Heart right ventricle (tissue), 16 donors: ENCODE measurements at regions of chr11 and their contacts with region 1.

Region 1: GRCh38 chr11:43895601-43896000 is 15.0 kb downstream of the ALKBH3 start:
- DNase-seq: no peak
- ATAC-seq: no peak
- H3K4me3 ChIP-seq: no peak overlapping the region
- H3K27ac ChIP-seq: no peak overlapping the region
- H3K4me1 ChIP-seq: no peaks in the 10 kb centered on the region
- H3K27me3 ChIP-seq: no peaks in the 10 kb centered on the region
- CTCF ChIP-seq: no peak

Region 2: GRCh38 chr11:43933608-43934551 is 38.3 kb after region 1 on chr11:
- intact Hi-C with region 1: loop called in 1 of 10 experiments (anchors 5 kb)
- DNase-seq: no peak
- ATAC-seq: peak in 4 of 8 donors; percentile 13 to 34 (median 16)
- H3K4me3 ChIP-seq: no peak overlapping the region
- H3K27ac ChIP-seq: no peak overlapping the region
- H3K4me1 ChIP-seq: peaks cover 0 to 20% (median 13%) of the 10 kb centered on the region in 9 donors
- H3K27me3 ChIP-seq: no peaks in the 10 kb centered on the region
- CTCF ChIP-seq: no peak

Region 3: DNA sequence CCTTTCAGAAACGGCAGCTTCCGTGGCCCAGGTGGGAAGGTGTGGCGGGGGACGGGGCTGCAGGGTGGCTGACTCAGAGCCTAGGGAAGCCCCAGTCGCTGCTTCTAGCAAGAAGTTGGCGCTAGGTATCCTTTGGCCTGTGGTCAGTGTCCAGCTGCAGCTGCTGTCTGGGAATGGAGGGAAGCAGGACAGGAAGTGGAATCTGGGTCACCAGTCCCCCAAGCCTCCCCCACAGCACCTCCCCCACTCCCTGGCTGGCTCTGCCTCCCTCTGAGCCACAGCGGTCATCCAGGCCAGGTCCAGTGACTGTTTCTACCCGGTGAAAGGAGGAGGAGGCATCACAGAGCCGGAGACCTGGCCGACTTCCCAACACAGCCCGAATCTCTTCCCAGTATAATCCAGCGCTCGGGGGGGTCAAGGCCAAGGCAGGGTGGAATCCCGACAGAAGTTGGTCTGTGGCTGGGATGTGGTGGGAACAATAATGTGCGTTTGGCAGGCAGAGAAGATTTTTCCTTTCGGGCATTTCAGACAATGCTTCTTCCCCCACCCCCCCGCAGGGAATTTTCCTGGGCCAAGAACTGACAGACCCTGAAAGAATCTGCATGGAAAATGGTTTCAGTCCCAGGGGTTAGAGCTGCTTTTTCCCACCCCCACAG is 91.9 kb after region 1 on chr11:
- intact Hi-C with region 1: loop called in 1 of 10 experiments (anchors 5 kb)
- DNase-seq: peak; percentile 93 to 94
- ATAC-seq: peak; percentile 79 to 90 (median 87)
- H3K4me3 ChIP-seq: peak overlapping the region in 4 of 10 donors; percentile 3 to 15 (median 12)
- H3K27ac ChIP-seq: peak overlapping the region; percentile 25 to 88 (median 81)
- H3K4me1 ChIP-seq: peaks cover 30 to 72% (median 68%) of the 10 kb centered on the region in 9 donors
- H3K27me3 ChIP-seq: no peaks in the 10 kb centered on the region
- CTCF ChIP-seq: no peak

Region 4: GRCh38 chr11:44036811-44037657 is 141.4 kb after region 1 on chr11:
- intact Hi-C with region 1: loop called in 8 of 10 experiments (anchors 1 to 2 kb)
- DNase-seq: peak; percentile 80 to 86
- ATAC-seq: peak; percentile 88 to 95 (median 92)
- H3K4me3 ChIP-seq: no peak overlapping the region
- H3K27ac ChIP-seq: peak overlapping the region in 3 of 10 donors; percentile 9 to 31 (median 25)
- H3K4me1 ChIP-seq: peaks cover 0 to 31% (median 24%) of the 10 kb centered on the region in 9 donors
- H3K27me3 ChIP-seq: no peaks in the 10 kb centered on the region
- CTCF ChIP-seq: peak; percentile 79 to 94 (median 88)

Region 5: GRCh38 chr11:44188643-44189042 is 293.0 kb after region 1 on chr11:
- intact Hi-C with region 1: no loop called
- DNase-seq: no peak
- ATAC-seq: no peak
- H3K4me3 ChIP-seq: no peak overlapping the region
- H3K27ac ChIP-seq: no peak overlapping the region
- H3K4me1 ChIP-seq: peaks cover 0 to 12% (median 0%) of the 10 kb centered on the region in 9 donors
- H3K27me3 ChIP-seq: no peaks in the 10 kb centered on the region
- CTCF ChIP-seq: no peak